Transverse colon (tissue), 4 donors: ENCODE measurements at regions of chr2 and their contacts with region 1.

Region 1: GRCh38 chr2:231604685-231605606 is 12.3 kb downstream of the TEX44 start:
- DNase-seq: peak; percentile 100
- H3K4me3 ChIP-seq: peak overlapping the region in 3 of 4 donors; percentile 39 to 55 (median 53)
- H3K27ac ChIP-seq: peak overlapping the region; percentile 96 to 99 (median 98)
- H3K4me1 ChIP-seq: peaks cover 18 to 44% (median 24%) of the 10 kb centered on the region in 4 donors
- H3K27me3 ChIP-seq: no peaks in the 10 kb centered on the region
- CTCF ChIP-seq: no peak
- EP300 ChIP-seq: peak; percentile 93
- POLR2A ChIP-seq: peak; percentile 58

Region 2: GRCh38 chr2:231514103-231514950 is 90.6 kb before region 1 on chr2:
- in situ Hi-C with region 1: loop called in 1 of 4 experiments (anchors 5 kb)
- intact Hi-C with region 1: no loop called
- DNase-seq: peak; percentile 98
- H3K4me3 ChIP-seq: peak overlapping the region; percentile 57 to 91 (median 59)
- H3K27ac ChIP-seq: peak overlapping the region; percentile 85 to 93 (median 89)
- H3K4me1 ChIP-seq: peaks cover 0 to 14% (median 6%) of the 10 kb centered on the region in 4 donors
- H3K27me3 ChIP-seq: no peaks in the 10 kb centered on the region
- CTCF ChIP-seq: no peak
- EP300 ChIP-seq: no peak
- POLR2A ChIP-seq: peak; percentile 86

Region 3: DNA sequence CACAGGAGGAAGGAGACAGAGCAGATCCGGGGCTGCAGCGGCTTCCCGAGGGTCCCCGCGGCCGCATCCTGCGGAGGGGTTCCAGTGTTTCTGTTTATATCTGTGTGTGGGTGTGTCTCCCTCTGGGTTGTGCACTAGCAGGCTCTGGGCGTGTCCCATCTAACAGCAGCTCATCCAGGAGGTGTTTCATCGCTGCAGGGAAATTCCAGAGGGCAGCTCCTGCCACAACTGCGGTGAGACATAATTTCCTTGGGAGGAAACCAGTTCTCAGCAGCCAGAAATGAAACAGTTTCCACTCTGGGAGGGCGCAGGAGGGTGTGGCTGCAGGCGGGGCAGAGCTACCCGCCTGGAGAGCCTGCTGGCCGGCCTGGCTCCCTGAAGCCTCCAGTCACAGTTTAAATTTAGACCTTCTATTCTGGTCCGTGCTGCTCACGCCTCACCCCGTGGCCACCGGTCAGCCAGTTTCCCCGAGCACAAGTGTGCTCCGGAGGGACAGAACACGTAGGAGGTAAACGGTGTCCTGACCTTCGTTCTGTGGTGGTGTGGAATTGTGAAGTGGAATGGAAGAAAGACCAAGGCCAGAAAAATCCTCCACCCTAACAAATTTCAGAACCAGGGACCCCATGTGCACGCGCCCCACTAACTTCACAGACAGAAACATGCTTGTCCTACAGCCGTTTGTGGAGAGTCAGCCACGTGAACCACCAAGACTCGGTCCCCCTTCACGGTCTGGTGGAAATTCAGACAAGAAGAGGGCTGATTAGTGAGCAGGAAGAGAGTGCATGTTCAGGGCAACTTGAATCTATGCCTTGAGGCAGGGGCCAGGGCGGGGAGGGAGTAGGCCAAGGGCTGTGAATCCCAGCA is 37.9 kb after region 1 on chr2:
- in situ Hi-C with region 1: no loop called
- intact Hi-C with region 1: no loop called
- DNase-seq: peak; percentile 91
- H3K4me3 ChIP-seq: peak overlapping the region in 2 of 4 donors; percentile 4 to 28
- H3K27ac ChIP-seq: peak overlapping the region; percentile 92 to 95 (median 94)
- H3K4me1 ChIP-seq: peaks cover 30 to 58% (median 43%) of the 10 kb centered on the region in 4 donors
- H3K27me3 ChIP-seq: no peaks in the 10 kb centered on the region
- CTCF ChIP-seq: peak in 1 of 5 experiments; percentile 16
- EP300 ChIP-seq: peak; percentile 78
- POLR2A ChIP-seq: peak; percentile 73

Region 4: DNA sequence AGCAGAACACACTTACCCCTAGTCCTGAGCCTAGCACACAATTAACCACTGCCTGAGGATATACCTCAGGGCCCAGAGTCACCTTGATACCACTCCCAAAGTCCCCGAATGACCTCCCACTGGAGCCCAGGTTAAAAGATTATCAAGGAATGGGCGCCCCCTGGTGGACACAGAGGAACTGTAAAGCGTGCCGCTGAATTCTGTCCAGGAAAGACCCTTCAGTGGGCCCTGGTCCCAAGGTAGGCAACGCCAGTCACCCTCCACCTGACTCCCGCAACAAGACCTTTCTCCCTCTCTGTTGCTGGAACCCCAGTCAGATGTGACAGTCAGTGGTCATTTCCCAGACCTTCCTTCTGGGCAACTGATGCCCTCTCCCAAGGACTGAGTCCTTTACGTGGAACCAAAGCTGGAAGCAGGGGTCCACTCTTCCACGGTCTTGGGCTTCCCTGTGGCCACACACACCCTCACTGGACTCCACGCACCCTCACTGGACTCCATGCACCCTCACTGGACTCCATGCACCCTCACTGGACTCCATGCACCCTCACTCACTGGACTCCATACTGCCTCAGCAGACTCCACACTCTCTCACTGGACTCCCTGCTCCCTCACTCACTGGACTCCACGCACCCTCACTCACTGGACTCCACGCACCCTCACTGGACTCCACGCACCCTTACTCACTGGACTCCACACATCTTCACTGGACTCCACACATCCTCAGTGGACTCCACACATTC is 110.5 kb after region 1 on chr2:
- in situ Hi-C with region 1: loop called in 2 of 4 experiments (anchors 5 kb)
- intact Hi-C with region 1: no loop called
- DNase-seq: peak; percentile 81
- H3K4me3 ChIP-seq: no peak overlapping the region
- H3K27ac ChIP-seq: peak overlapping the region in 3 of 4 donors; percentile 76 to 85 (median 83)
- H3K4me1 ChIP-seq: peaks cover 20 to 37% (median 22%) of the 10 kb centered on the region in 4 donors
- H3K27me3 ChIP-seq: no peaks in the 10 kb centered on the region
- CTCF ChIP-seq: peak; percentile 91 to 98 (median 93)
- EP300 ChIP-seq: no peak
- POLR2A ChIP-seq: no peak

Region 5: GRCh38 chr2:232204457-232204931 is 599.5 kb after region 1 on chr2:
- in situ Hi-C with region 1: no loop called
- intact Hi-C with region 1: no loop called
- DNase-seq: no peak
- H3K4me3 ChIP-seq: no peak overlapping the region
- H3K27ac ChIP-seq: peak overlapping the region in 1 of 4 donors; percentile 6
- H3K4me1 ChIP-seq: peaks cover 0 to 3% (median 0%) of the 10 kb centered on the region in 4 donors
- H3K27me3 ChIP-seq: no peaks in the 10 kb centered on the region
- CTCF ChIP-seq: no peak
- EP300 ChIP-seq: no peak
- POLR2A ChIP-seq: no peak